GM12878 (cell line): ENCODE measurements at regions of chr1 and their contacts with region 1.

Region 1: GRCh38 chr1:8314346-8315280 is 3.3 kb upstream of the SLC45A1 start:
- DNase-seq: peak; percentile 11
- ATAC-seq: peak; percentile 88
- H3K4me3 ChIP-seq: no peak overlapping the region
- H3K27ac ChIP-seq: no peak overlapping the region
- H3K4me1 ChIP-seq: no peaks in the 10 kb centered on the region
- H3K27me3 ChIP-seq: peaks cover 0 to 4% of the 10 kb centered on the region in 2 experiments; a peak in 1 of 4 replicates
- CTCF ChIP-seq: peak; percentile 80 to 94 (median 89)
- EP300 ChIP-seq: no peak
- POLR2A ChIP-seq: no peak
- RAD21 ChIP-seq: peak; percentile 98

Region 2: DNA sequence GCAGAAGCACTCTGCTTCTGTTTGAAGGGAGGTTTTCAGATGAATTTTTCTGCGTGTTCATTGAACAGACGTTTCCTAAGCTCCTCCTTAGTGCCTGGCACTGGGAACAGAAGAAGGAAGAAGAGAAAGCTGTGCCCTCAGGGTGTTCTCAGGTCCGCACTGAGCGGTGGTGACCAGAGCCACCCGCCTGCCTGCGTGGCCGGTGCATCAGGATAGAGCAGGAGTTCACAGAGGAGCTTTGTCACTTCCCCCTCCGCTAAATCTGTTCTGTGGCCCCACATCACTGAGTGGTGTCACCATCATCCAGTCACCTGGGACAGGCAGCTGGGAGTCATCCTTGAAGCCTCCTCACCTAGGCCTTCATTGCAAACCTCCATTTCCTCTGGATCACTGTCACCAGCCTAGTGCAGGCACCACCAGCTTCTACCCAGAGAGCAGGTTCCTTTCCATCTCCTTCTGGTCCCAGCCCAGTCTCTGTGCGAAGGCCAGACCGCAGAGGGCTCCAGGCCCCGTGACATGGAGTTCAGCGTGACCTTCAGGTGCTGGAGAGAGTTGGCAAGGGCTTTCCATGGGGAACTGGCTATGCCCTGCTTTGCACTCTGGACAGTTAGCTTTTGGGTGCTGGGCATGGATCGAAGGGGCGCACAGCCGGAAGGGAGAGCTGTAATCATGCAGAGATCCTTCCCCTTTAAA is 331.4 kb before region 1 on chr1:
- CTCF ChIA-PET with region 1: interaction called, 6 read pairs
- POLR2A ChIA-PET with region 1: interaction called, 4 read pairs
- RAD21 ChIA-PET with region 1: interaction called, 10 read pairs
- SMC1A ChIA-PET with region 1: interaction called, 3 read pairs
- in situ Hi-C with region 1: no loop called
- intact Hi-C with region 1: loop called (anchors 5 kb)
- DNase-seq: no peak
- ATAC-seq: no peak
- H3K4me3 ChIP-seq: no peak overlapping the region
- H3K27ac ChIP-seq: no peak overlapping the region
- H3K4me1 ChIP-seq: peaks cover 4% of the 10 kb centered on the region; the same call in 1 of the 2 replicates
- H3K27me3 ChIP-seq: no peaks in the 10 kb centered on the region
- CTCF ChIP-seq: no peak
- EP300 ChIP-seq: no peak
- POLR2A ChIP-seq: no peak
- RAD21 ChIP-seq: no peak

Region 3: GRCh38 chr1:8026153-8026975 is 288.2 kb before region 1 on chr1 and contains the start of gene ERRFI1:
- CTCF ChIA-PET with region 1: interaction called, 51 read pairs
- POLR2A ChIA-PET with region 1: no interaction called
- RAD21 ChIA-PET with region 1: interaction called, 21 read pairs
- SMC1A ChIA-PET with region 1: interaction called, 37 read pairs
- in situ Hi-C with region 1: loop called (anchors 5 kb)
- intact Hi-C with region 1: loop called (anchors 2 kb)
- DNase-seq: peak; percentile 28
- ATAC-seq: peak; percentile 97
- H3K4me3 ChIP-seq: peak within 1 kb of the TSS; percentile 75
- H3K27ac ChIP-seq: no peak within 1 kb of the TSS
- H3K4me1 ChIP-seq: peaks cover 5% of the 10 kb centered on the region
- H3K27me3 ChIP-seq: peaks cover 0 to 4% of the 10 kb centered on the region in 2 experiments; a peak in 1 of 4 replicates
- CTCF ChIP-seq: no peak
- EP300 ChIP-seq: no peak
- POLR2A ChIP-seq: peak; percentile 93
- RAD21 ChIP-seq: no peak
- polyA plus RNA-seq, gene ERRFI1: 1.6 to 2.4 TPM

Region 4: GRCh38 chr1:8302081-8302956 is 12.3 kb before region 1 on chr1:
- CTCF ChIA-PET with region 1: interaction called, 12 read pairs
- POLR2A ChIA-PET with region 1: interaction called, 8 read pairs
- RAD21 ChIA-PET with region 1: no interaction called
- SMC1A ChIA-PET with region 1: interaction called, 4 read pairs
- in situ Hi-C with region 1: no loop called
- intact Hi-C with region 1: no loop called
- DNase-seq: no peak
- ATAC-seq: no peak
- H3K4me3 ChIP-seq: no peak overlapping the region
- H3K27ac ChIP-seq: no peak overlapping the region
- H3K4me1 ChIP-seq: no peaks in the 10 kb centered on the region
- H3K27me3 ChIP-seq: no peaks in the 10 kb centered on the region
- CTCF ChIP-seq: no peak
- EP300 ChIP-seq: no peak
- POLR2A ChIP-seq: no peak
- RAD21 ChIP-seq: no peak

Region 5: GRCh38 chr1:8348777-8349491 is 34.3 kb after region 1 on chr1:
- CTCF ChIA-PET with region 1: interaction called, 15 read pairs
- POLR2A ChIA-PET with region 1: no interaction called
- RAD21 ChIA-PET with region 1: interaction called, 3 read pairs
- SMC1A ChIA-PET with region 1: interaction called, 3 read pairs
- in situ Hi-C with region 1: no loop called
- intact Hi-C with region 1: no loop called
- DNase-seq: no peak
- ATAC-seq: peak; percentile 88
- H3K4me3 ChIP-seq: no peak overlapping the region
- H3K27ac ChIP-seq: no peak overlapping the region
- H3K4me1 ChIP-seq: no peaks in the 10 kb centered on the region
- H3K27me3 ChIP-seq: no peaks in the 10 kb centered on the region
- CTCF ChIP-seq: peak; percentile 70 to 91 (median 78)
- EP300 ChIP-seq: no peak
- POLR2A ChIP-seq: no peak
- RAD21 ChIP-seq: peak; percentile 86